ENCODE measurements at regions of chr6 and their contacts with region 1.

Region 1: GRCh38 chr6:138987640-138988468 is at the start of gene REPS1:
- DNase-seq: peak; percentile 84
- H3K4me3 ChIP-seq: peak within 1 kb of the TSS; percentile 52 to 97 (median 66)
- H3K27ac ChIP-seq: peak within 1 kb of the TSS; percentile 58
- H3K4me1 ChIP-seq: peaks cover 12% of the 10 kb centered on the region
- H3K27me3 ChIP-seq: peaks cover 0 to 3% of the 10 kb centered on the region in 2 experiments
- CTCF ChIP-seq: peak; percentile 90 to 95
- POLR2A ChIP-seq: peak; percentile 69
- total RNA-seq, gene REPS1: 26.3 and 35.0 TPM in 2 replicates

Region 2: GRCh38 chr6:138428944-138429598 is 558.8 kb before region 1 on chr6:
- CTCF ChIA-PET with region 1: no interaction called
- POLR2A ChIA-PET with region 1: no interaction called
- dilution Hi-C with region 1: no loop called
- intact Hi-C with region 1: loop called (anchors 1 kb)
- DNase-seq: peak; percentile 62
- H3K4me3 ChIP-seq: no peak overlapping the region
- H3K27ac ChIP-seq: no peak overlapping the region
- H3K4me1 ChIP-seq: no peaks in the 10 kb centered on the region
- H3K27me3 ChIP-seq: no peaks in the 10 kb centered on the region
- CTCF ChIP-seq: peak; percentile 36 to 41
- POLR2A ChIP-seq: no peak

Region 3: DNA sequence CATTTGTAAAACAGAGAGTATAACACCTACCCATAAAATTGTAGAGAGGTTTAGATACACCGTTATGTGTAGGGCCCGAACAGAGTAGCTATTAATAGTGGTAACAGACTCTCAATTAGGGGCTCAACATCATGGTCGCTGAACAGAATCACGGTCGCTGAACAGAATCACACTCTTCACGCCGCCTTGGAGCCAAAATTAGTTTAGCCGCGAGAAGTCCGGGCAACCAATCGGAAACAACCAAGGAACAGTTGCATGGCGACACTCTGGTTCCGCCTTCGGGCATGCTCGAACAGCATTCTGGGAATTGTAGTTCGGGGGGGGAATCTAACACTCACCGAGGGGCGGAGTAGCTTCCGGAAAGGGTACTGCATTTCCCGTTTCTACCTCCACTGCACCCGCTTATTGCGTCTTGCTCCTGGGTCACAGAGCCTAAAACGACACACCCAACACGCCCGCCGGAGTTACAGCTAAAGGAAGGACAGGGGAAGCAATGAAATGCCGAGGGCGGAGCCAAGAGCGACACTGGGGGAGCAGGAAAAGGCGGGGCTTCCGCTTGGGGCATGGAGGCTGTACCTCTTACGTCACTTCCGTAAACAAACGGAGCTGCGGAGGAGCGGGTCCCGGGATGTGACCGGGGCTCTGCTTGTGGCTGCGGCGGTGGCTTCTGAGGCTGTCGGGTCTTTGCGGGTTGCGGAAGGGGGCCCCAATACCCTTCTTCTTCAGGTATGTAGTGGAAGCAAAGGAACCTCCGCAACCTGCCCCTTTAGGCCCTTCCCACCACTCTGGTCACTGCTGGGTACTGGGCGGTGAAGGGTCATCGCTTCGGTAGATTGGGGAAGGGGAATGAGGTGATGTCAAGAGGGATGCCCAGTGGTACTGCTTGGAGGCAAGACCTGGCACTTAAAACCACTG is 214.4 kb before region 1 on chr6 and contains the start of gene CCDC28A:
- CTCF ChIA-PET with region 1: no interaction called
- POLR2A ChIA-PET with region 1: no interaction called
- dilution Hi-C with region 1: no loop called
- intact Hi-C with region 1: loop called (anchors 1 kb)
- DNase-seq: peak; percentile 97
- H3K4me3 ChIP-seq: peak within 1 kb of the TSS; percentile 61 to 84 (median 83)
- H3K27ac ChIP-seq: peak within 1 kb of the TSS; percentile 95
- H3K4me1 ChIP-seq: peaks cover 23% of the 10 kb centered on the region
- H3K27me3 ChIP-seq: no peaks in the 10 kb centered on the region
- CTCF ChIP-seq: no peak
- POLR2A ChIP-seq: no peak
- total RNA-seq, gene CCDC28A: 10.5 and 12.8 TPM in 2 replicates

Region 4: DNA sequence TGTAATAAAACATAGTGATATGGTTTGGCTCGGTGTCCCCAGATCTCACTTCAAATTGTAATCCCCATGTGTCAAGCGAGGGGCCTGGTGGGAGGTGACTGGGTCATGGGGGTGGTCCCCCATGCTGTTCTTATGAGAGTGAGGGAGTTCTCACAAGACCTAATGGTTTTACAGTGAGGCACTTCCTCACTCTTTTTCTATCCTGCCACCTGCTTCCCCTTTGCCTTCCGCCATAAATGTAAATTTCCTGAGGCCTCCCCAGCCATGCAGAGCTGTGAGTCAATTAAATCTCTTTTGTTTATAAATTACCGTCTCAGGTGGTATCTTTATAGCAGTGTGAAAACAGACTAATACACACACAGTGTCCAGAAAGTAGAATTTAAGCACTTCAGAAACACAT is 78.3 kb before region 1 on chr6:
- CTCF ChIA-PET with region 1: interaction called, 3 read pairs
- POLR2A ChIA-PET with region 1: no interaction called
- dilution Hi-C with region 1: no loop called
- intact Hi-C with region 1: loop called (anchors 5 kb)
- DNase-seq: peak; percentile 31
- H3K4me3 ChIP-seq: no peak overlapping the region
- H3K27ac ChIP-seq: no peak overlapping the region
- H3K4me1 ChIP-seq: no peaks in the 10 kb centered on the region
- H3K27me3 ChIP-seq: no peaks in the 10 kb centered on the region
- CTCF ChIP-seq: no peak
- POLR2A ChIP-seq: no peak

Region 5: DNA sequence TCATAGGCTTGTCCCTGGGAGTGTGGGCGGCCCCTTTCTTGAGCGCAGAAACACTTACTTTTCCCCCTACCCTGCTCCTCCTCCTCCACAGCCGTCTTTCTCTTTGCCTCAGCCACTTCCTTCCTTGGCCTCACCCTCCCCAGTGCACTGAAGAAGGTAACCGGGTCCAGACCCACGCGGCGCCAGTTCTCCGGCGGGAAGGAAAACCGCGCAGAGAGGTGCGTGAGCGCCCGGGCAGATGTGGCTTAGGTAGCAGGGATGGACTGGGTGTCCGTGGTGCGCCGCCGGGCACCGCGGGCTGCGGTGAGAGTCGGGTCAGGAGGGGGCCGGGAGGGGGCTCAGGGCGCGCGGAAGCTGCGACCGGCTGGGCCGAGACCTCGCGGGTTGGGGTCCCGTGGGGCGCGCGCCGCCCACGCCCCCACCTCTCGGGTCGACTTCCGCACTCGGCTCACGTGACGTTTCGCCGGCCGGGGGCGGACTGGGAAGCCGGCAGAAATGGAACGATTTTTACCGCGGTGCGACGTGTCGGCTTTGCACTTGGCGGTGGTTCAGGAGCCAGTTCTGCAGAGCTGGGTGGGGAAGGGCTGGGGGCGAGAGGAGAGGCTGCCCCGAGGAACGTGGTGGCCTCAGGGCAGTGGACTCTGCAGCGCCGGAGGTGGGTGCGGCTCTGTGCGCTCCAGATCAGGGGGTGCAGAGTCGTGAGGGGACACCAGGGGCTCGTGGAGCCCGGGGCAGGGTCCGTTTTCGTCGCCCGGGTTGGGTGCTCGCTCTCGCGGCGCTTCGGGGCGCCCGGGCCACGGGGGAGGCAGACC is 41.0 kb after region 1 on chr6 and contains the start of gene ABRACL:
- CTCF ChIA-PET with region 1: interaction called, 3 read pairs
- POLR2A ChIA-PET with region 1: no interaction called
- dilution Hi-C with region 1: no loop called
- intact Hi-C with region 1: loop called (anchors 1 kb)
- DNase-seq: peak; percentile 70
- H3K4me3 ChIP-seq: peak within 1 kb of the TSS; percentile 74 to 94 (median 77)
- H3K27ac ChIP-seq: peak within 1 kb of the TSS; percentile 81
- H3K4me1 ChIP-seq: peaks cover 19% of the 10 kb centered on the region
- H3K27me3 ChIP-seq: no peaks in the 10 kb centered on the region
- CTCF ChIP-seq: no peak
- POLR2A ChIP-seq: peak; percentile 16
- total RNA-seq, gene ABRACL: 87.4 and 104 TPM in 2 replicates

Region 6: GRCh38 chr6:139073118-139073517 is 85.3 kb after region 1 on chr6:
- CTCF ChIA-PET with region 1: no interaction called
- POLR2A ChIA-PET with region 1: no interaction called
- dilution Hi-C with region 1: no loop called
- intact Hi-C with region 1: no loop called
- DNase-seq: no peak
- H3K4me3 ChIP-seq: no peak overlapping the region
- H3K27ac ChIP-seq: no peak overlapping the region
- H3K4me1 ChIP-seq: no peaks in the 10 kb centered on the region
- H3K27me3 ChIP-seq: no peaks in the 10 kb centered on the region
- CTCF ChIP-seq: no peak
- POLR2A ChIP-seq: no peak